Mammary epithelial cell (primary cell): ENCODE measurements at regions of chr4 and their contacts with region 1.

Region 1: DNA sequence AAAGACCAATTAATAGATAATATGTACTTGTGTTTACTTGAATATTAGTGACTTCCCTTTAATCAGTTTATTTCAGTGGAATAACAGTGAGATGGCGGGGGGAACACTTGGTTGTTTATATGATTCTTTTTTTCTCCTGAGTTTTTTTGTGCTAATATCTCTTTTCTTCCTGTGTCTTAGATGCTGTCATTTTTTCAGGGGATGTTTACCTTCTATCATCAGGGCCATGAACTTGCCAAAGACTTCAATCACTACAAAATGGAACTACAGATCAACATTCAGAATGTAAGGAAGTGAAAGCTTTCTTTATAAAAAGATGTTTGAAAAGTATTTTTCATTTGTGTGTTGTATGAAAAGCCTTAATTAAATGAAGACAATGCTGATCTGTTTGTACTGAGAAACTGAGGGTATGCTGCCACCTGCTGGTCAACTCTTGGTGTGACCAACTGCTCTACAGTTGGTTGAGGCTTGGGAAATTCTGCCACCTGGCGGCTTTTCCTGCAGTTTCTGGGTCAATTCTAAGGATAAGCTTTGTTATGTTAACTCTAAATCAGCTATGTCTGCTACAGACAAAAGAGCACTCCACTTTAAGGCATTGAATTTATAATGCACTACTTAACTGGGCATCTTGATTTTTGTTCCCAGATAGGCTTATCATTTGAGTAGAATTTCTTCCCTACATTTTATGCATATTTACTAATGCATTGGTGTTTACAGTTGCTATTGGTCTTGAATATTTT is 134.8 kb downstream of the ARHGAP10 start:
- DNase-seq: peak; percentile 71
- H3K4me3 ChIP-seq: no peak overlapping the region
- H3K27ac ChIP-seq: no peak overlapping the region
- H3K4me1 ChIP-seq: no peaks in the 10 kb centered on the region
- H3K27me3 ChIP-seq: no peaks in the 10 kb centered on the region
- CTCF ChIP-seq: peak; percentile 99

Region 2: GRCh38 chr4:147019061-147019460 is 847.6 kb before region 1 on chr4:
- CTCF ChIA-PET with region 1: no interaction called
- dilution Hi-C with region 1: no loop called
- in situ Hi-C with region 1: no loop called
- intact Hi-C with region 1: loop called (anchors 10 kb)
- DNase-seq: peak; percentile 42
- H3K4me3 ChIP-seq: no peak overlapping the region
- H3K27ac ChIP-seq: no peak overlapping the region
- H3K4me1 ChIP-seq: no peaks in the 10 kb centered on the region
- H3K27me3 ChIP-seq: peaks cover 3% of the 10 kb centered on the region
- CTCF ChIP-seq: peak; percentile 69 to 81

Region 3: GRCh38 chr4:147518846-147519767 is 347.6 kb before region 1 on chr4:
- CTCF ChIA-PET with region 1: interaction called, 5 read pairs
- dilution Hi-C with region 1: no loop called
- in situ Hi-C with region 1: no loop called
- intact Hi-C with region 1: loop called (anchors 10 kb)
- DNase-seq: peak; percentile 60
- H3K4me3 ChIP-seq: no peak overlapping the region
- H3K27ac ChIP-seq: no peak overlapping the region
- H3K4me1 ChIP-seq: peaks cover 5% of the 10 kb centered on the region
- H3K27me3 ChIP-seq: no peaks in the 10 kb centered on the region
- CTCF ChIP-seq: peak; percentile 96 to 97

Region 4: GRCh38 chr4:147617173-147617840 is 249.4 kb before region 1 on chr4 and contains the start of gene TMEM184C:
- CTCF ChIA-PET with region 1: interaction called, 3 read pairs
- dilution Hi-C with region 1: no loop called
- in situ Hi-C with region 1: no loop called
- intact Hi-C with region 1: loop called (anchors 1 kb)
- DNase-seq: peak; percentile 95
- H3K4me3 ChIP-seq: peak within 1 kb of the TSS; percentile 63 to 98 (median 93)
- H3K27ac ChIP-seq: peak within 1 kb of the TSS; percentile 73
- H3K4me1 ChIP-seq: peaks cover 3% of the 10 kb centered on the region
- H3K27me3 ChIP-seq: no peaks in the 10 kb centered on the region
- CTCF ChIP-seq: peak in 1 of 2 donors; percentile 21
- total RNA-seq, gene TMEM184C: 33.9 to 53.5 TPM

Region 5: DNA sequence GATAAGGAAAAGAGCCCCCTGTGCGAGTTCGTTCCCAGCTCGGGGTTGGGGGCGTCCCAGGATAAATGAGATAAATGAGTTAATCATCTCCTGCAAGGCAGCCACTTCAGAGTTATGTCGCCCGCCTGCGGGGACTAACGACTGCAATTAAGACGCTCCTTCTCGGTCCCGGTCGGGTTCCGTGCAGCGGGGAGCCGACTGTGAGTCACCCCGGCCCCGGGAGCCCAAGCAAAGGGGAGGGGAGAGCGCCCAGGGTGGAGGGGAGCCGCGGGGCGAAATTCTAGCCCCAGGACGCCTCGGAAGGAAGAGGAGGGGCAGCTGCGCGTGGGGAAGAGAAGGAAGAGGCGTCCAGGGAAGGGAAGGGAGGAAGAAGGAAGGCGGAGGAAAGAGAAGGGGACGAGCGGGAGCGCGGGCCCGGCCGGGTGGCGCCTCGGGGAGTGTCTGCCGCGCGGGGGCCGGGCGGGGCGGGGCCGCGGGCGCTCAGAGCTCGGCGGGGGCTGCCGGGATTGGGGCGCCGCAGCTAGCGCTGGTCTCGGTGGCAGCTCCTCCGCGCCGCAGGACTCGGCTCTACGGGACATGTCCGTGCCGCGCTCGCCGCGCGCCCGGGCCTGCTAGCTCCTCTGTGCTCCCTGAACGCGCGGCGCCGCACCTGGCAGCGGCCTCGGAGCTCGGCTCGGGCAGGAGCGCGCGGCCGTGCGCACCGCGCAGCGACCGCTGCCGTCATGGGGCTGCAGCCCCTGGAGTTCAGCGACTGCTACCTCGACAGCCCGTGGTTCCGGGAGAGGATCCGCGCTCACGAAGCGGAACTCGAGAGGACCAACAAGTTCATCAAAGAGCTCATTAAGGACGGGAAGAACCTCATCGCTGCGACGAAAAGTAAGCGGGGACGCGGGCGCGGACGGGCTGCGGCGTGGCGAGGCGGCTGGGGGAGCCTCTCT is 134.9 kb before region 1 on chr4 and contains the start of gene ARHGAP10:
- CTCF ChIA-PET with region 1: interaction called, 10 read pairs
- dilution Hi-C with region 1: no loop called
- in situ Hi-C with region 1: no loop called
- intact Hi-C with region 1: loop called (anchors 1 kb)
- DNase-seq: peak; percentile 82
- H3K4me3 ChIP-seq: peak within 1 kb of the TSS; percentile 85 to 91 (median 86)
- H3K27ac ChIP-seq: peak within 1 kb of the TSS; percentile 80
- H3K4me1 ChIP-seq: peaks cover 48% of the 10 kb centered on the region
- H3K27me3 ChIP-seq: no peaks in the 10 kb centered on the region
- CTCF ChIP-seq: no peak
- total RNA-seq, gene ARHGAP10: 22.5 to 28.8 TPM